CD4-positive, alpha-beta T cell (primary cell): ENCODE measurements at regions of chr2 and their contacts with region 1.

Region 1: DNA sequence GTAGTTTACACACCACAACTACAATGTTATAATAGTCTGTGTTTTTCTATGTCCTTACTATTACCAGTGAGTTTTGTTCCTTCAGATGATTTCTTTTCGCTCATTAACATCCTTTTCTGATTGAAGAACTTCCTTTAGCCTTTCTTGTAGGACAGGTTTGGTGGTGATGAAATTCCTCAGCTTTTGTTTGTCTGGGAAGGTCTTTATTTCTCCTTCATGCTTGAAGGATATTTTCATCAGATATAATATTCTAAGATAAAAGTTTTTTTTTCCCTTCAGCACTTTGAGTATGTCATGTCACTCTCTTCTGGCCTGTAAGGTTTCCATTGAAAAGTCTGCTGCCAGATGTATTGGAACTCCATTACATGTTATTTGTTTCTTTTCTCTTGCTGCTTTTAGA is 38.1 kb upstream of the SLC16A14 start:
- DNase-seq: no peak
- ATAC-seq: no peak
- H3K4me3 ChIP-seq: no peak overlapping the region
- H3K4me3 Mint-ChIP-seq: no peak overlapping the region
- H3K27ac ChIP-seq: no peak overlapping the region
- H3K27ac Mint-ChIP-seq: no peak overlapping the region
- H3K4me1 ChIP-seq: no peaks in the 10 kb centered on the region
- H3K4me1 Mint-ChIP-seq: no peaks in the 10 kb centered on the region
- H3K27me3 ChIP-seq: peaks cover 0 to 2% of the 10 kb centered on the region in 2 experiments
- H3K27me3 Mint-ChIP-seq: peaks cover 17% of the 10 kb centered on the region
- CTCF ChIP-seq: no peak

Region 2: GRCh38 chr2:229118927-229119326 is 987.9 kb before region 1 on chr2:
- CTCF ChIA-PET with region 1: no interaction called
- POLR2A ChIA-PET with region 1: no interaction called
- intact Hi-C with region 1: no loop called
- DNase-seq: no peak
- ATAC-seq: no peak
- H3K4me3 ChIP-seq: no peak overlapping the region
- H3K4me3 Mint-ChIP-seq: no peak overlapping the region
- H3K27ac ChIP-seq: no peak overlapping the region
- H3K27ac Mint-ChIP-seq: no peak overlapping the region
- H3K4me1 ChIP-seq: no peaks in the 10 kb centered on the region
- H3K4me1 Mint-ChIP-seq: no peaks in the 10 kb centered on the region
- H3K27me3 ChIP-seq: no peaks in the 10 kb centered on the region
- H3K27me3 Mint-ChIP-seq: no peaks in the 10 kb centered on the region
- CTCF ChIP-seq: no peak

Region 3: DNA sequence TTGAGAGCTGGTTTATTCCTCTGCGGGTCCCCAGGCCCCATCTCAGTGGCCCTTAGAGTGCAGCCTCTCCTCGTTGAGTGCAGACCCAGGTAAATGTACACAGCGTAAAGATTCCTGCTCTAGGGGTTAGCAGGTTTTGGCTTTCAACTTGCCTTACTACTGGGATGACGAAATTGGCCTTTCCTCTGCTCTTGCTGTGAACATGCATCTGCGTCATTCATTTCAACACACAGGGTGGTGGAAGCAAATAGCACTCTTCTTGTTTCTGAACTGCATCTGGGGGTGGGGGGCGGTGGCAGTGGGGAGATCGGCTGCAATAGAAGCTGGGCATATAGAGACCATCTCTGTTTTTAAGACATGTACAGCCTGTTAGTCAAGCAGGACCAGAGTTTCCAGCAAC is 21.6 kb before region 1 on chr2:
- CTCF ChIA-PET with region 1: no interaction called
- POLR2A ChIA-PET with region 1: no interaction called
- intact Hi-C with region 1: loop called in 1 of 2 experiments (anchors 2 kb)
- DNase-seq: no peak
- ATAC-seq: no peak
- H3K4me3 ChIP-seq: no peak overlapping the region
- H3K4me3 Mint-ChIP-seq: no peak overlapping the region
- H3K27ac ChIP-seq: no peak overlapping the region
- H3K27ac Mint-ChIP-seq: no peak overlapping the region
- H3K4me1 ChIP-seq: no peaks in the 10 kb centered on the region
- H3K4me1 Mint-ChIP-seq: no peaks in the 10 kb centered on the region
- H3K27me3 ChIP-seq: no peaks in the 10 kb centered on the region
- H3K27me3 Mint-ChIP-seq: peaks cover 16% of the 10 kb centered on the region
- CTCF ChIP-seq: no peak

Region 4: GRCh38 chr2:230124757-230125431 is 18.1 kb after region 1 on chr2:
- CTCF ChIA-PET with region 1: no interaction called
- POLR2A ChIA-PET with region 1: no interaction called
- intact Hi-C with region 1: no loop called
- DNase-seq: peak in 4 of 14 experiments; percentile 0 to 49 (median 28)
- ATAC-seq: no peak
- H3K4me3 ChIP-seq: no peak overlapping the region
- H3K4me3 Mint-ChIP-seq: no peak overlapping the region
- H3K27ac ChIP-seq: no peak overlapping the region
- H3K27ac Mint-ChIP-seq: no peak overlapping the region
- H3K4me1 ChIP-seq: peaks cover 6% of the 10 kb centered on the region
- H3K4me1 Mint-ChIP-seq: peaks cover 23% of the 10 kb centered on the region
- H3K27me3 ChIP-seq: peaks cover 0 to 4% of the 10 kb centered on the region in 2 experiments
- H3K27me3 Mint-ChIP-seq: no peaks in the 10 kb centered on the region
- CTCF ChIP-seq: no peak